A673 (cell line): ENCODE measurements at regions of chr3 and their contacts with region 1.

Region 1: GRCh38 chr3:187139126-187139894 is at the start of gene RPL39L:
- DNase-seq: peak; percentile 95
- H3K4me3 ChIP-seq: peak within 1 kb of the TSS; percentile 65
- H3K27ac ChIP-seq: peak within 1 kb of the TSS; percentile 87
- H3K4me1 ChIP-seq: no peaks in the 10 kb centered on the region
- H3K27me3 ChIP-seq: no peaks in the 10 kb centered on the region
- CTCF ChIP-seq: peak; percentile 97
- total RNA-seq, gene RPL39L: 35.3 and 43.2 TPM in 2 replicates

Region 2: DNA sequence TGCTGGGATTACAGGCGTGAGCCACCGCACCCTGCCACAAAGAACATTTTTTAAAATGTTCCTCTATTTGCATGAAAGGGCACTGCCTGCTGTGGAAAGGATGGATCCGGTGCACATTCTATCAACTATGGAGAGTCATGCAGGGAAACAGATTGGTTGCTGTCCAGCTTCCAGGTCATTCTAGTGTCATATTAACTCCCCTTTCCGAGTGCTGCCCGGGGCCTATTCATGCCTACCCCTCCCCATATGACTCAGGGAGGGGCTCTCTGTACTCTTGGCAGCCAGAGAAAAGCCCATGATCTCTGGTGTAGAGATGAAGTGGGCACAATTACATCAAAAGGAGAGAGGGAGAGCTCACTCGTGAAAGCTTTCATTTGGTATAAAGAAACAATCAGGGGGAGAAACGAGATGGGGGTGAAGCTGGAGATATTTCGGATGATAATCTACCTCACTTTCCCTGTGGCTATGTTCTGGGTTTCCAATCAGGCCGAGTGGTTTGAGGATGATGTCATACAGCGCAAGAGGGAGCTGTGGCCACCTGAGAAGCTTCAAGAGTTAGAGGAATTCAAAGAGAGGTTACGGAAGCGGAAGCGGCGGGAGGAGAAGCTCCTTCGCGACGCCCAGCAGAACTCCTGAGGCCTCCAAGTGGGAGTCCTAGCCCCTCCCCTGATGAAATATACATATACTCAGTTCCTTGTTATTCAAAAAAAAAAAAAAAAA is 542.6 kb before region 1 on chr3:
- CTCF ChIA-PET with region 1: no interaction called
- POLR2A ChIA-PET with region 1: interaction called, 10 read pairs
- intact Hi-C with region 1: no loop called
- DNase-seq: no peak
- H3K4me3 ChIP-seq: no peak overlapping the region
- H3K27ac ChIP-seq: no peak overlapping the region
- H3K4me1 ChIP-seq: no peaks in the 10 kb centered on the region
- H3K27me3 ChIP-seq: no peaks in the 10 kb centered on the region
- CTCF ChIP-seq: no peak

Region 3: DNA sequence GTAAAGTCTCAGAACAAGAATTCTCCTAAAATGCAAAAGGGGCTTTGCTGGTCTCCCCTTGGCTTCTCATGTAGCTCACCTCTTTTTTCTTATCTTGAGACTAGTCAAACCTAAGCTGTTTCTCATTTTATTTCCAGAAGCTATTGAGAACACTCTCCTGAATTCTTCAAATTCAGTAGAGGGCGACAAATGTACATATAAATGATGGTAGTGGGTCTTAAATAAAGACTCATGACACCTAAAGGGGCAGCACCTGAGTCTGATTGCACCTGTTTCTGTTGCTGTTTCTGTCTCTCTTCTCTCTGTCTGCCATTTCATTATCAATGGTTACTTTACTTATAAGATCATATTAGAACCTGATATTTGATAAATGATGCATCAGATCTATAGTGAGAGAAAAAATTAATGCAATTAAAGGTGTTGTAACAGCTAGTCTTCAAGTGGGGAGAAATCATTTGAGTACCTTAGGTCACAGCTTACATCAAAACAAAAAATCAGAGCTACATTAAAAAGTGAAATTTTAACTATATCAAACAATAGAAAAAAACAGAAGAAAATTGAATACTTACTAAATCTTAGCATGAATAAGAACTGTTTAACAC is 289.8 kb before region 1 on chr3:
- CTCF ChIA-PET with region 1: interaction called, 27 read pairs
- POLR2A ChIA-PET with region 1: interaction called, 3 read pairs
- intact Hi-C with region 1: no loop called
- DNase-seq: peak; percentile 67
- H3K4me3 ChIP-seq: no peak overlapping the region
- H3K27ac ChIP-seq: no peak overlapping the region
- H3K4me1 ChIP-seq: peaks cover 22% of the 10 kb centered on the region
- H3K27me3 ChIP-seq: no peaks in the 10 kb centered on the region
- CTCF ChIP-seq: peak; percentile 71

Region 4: DNA sequence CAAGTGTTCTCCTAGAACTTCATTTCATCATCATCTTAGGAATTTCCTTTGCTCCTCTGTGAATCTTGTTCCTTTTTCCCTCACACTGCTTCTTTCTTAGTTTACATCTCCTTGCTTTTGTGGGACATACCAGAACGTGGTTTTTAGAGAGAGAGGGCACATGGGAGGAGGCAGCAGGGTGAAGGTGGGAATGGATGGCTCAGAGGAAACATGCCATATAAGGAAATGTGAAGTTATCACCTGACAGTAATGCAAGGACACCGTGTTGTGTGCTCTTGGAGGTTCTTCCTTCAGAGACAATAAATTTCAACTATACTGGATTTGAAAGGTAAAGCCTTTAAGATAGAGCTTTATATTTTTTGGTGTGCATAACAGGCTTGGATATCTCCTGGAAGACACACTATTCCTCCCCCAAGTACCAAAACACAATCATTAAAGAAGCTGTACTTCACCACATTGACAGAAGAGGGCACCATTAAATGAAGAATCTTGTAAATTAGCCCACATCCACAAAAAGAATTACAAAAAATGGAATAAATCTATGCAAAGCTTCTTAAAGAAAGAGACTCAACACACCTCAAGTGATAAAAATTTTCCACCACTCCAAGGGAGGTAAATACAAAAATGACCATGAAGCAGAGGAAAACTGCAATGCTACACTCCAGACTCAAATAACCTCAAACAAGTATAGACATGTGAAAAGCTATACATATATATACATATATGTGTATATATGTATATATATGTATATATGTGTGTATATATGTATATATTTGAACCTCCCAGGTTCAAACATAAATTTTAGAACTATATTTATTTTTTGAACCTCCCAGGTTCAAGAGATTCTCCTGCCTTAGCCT is 26.1 kb before region 1 on chr3:
- CTCF ChIA-PET with region 1: interaction called, 10 read pairs
- POLR2A ChIA-PET with region 1: no interaction called
- intact Hi-C with region 1: no loop called
- DNase-seq: peak; percentile 49
- H3K4me3 ChIP-seq: no peak overlapping the region
- H3K27ac ChIP-seq: peak overlapping the region; percentile 31
- H3K4me1 ChIP-seq: peaks cover 7% of the 10 kb centered on the region
- H3K27me3 ChIP-seq: no peaks in the 10 kb centered on the region
- CTCF ChIP-seq: peak; percentile 67

Region 5: GRCh38 chr3:187197057-187197649 is 57.8 kb after region 1 on chr3 and contains the start of gene RTP1:
- CTCF ChIA-PET with region 1: no interaction called
- POLR2A ChIA-PET with region 1: no interaction called
- intact Hi-C with region 1: no loop called
- DNase-seq: no peak
- H3K4me3 ChIP-seq: no peak within 1 kb of the TSS
- H3K27ac ChIP-seq: no peak within 1 kb of the TSS
- H3K4me1 ChIP-seq: no peaks in the 10 kb centered on the region
- H3K27me3 ChIP-seq: no peaks in the 10 kb centered on the region
- CTCF ChIP-seq: no peak
- total RNA-seq, gene RTP1: not detected in 2 replicates